HEK293T (cell line): ENCODE measurements at regions of chr14 and their contacts with region 1.

Region 1: GRCh38 chr14:76784266-76785264 is 23.3 kb downstream of the VASH1 start:
- DNase-seq: peak; percentile 92

Region 2: GRCh38 chr14:76615331-76615730 is 169.2 kb before region 1 on chr14:
- CTCF ChIA-PET with region 1: no interaction called
- POLR2A ChIA-PET with region 1: no interaction called
- DNase-seq: no peak

Region 3: GRCh38 chr14:76710056-76711010 is 74.2 kb before region 1 on chr14:
- CTCF ChIA-PET with region 1: interaction called, 69 read pairs
- POLR2A ChIA-PET with region 1: interaction called, 4 read pairs
- DNase-seq: peak; percentile 61

Region 4: DNA sequence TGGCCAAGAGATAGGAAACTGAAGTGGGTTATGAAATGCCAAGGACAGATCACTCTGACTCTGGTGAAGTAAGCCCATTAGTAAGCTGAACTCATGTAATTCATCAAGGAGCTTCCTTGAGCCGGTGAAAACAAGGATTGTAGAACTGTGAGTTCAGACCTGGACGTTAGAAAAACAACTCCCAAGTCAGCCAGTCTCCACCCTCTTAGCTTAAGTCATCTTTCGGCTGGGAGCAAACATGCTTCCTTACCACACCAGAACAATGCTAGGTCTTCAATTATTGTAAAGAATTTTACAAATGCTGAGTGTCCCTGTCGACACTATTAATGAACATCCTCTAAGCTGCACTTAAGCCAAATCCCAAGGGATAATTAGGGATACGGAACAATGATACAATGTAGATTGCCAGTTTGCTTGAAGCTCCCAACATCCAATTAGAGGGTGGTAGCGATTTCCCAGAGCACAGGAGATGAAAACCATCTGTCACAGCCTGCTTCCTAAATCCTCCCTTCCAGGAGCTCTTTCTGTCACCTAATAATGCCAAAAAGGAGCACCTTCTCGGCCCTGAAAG is 69.0 kb before region 1 on chr14:
- CTCF ChIA-PET with region 1: interaction called, 69 read pairs
- POLR2A ChIA-PET with region 1: interaction called, 4 read pairs
- DNase-seq: no peak

Region 5: GRCh38 chr14:76767681-76768656 is 16.6 kb before region 1 on chr14:
- CTCF ChIA-PET with region 1: interaction called, 13 read pairs
- POLR2A ChIA-PET with region 1: no interaction called
- DNase-seq: no peak